Activated T-helper 2 cell treated with anti-CD3 and anti-CD28 coated beads, Interferon-gamma antibody, Interleukin-2, Interleukin-4, amounts not matched to agents 10 μg/mL and 5 μg/mL and 100 μg/mL, durations not matched to agents 14 hours and 24 hours and 36 hours (primary cell): ENCODE measurements at regions of chr2 and their contacts with region 1.

Region 1: GRCh38 chr2:64019719-64020528 is 696 bp upstream of the VPS54 start:
- DNase-seq: no peak
- H3K4me3 Mint-ChIP-seq: peak overlapping the region; percentile 81
- H3K27ac Mint-ChIP-seq: peak overlapping the region; percentile 94
- H3K4me1 Mint-ChIP-seq: peaks cover 40% of the 10 kb centered on the region
- H3K27me3 Mint-ChIP-seq: no peaks in the 10 kb centered on the region

Region 2: GRCh38 chr2:63841254-63842022 is 178.5 kb before region 1 on chr2 and contains the start of gene UGP2:
- intact Hi-C with region 1: loop called (anchors 5 kb)
- DNase-seq: peak; percentile 88
- H3K4me3 Mint-ChIP-seq: peak within 1 kb of the TSS; percentile 92
- H3K27ac Mint-ChIP-seq: peak within 1 kb of the TSS; percentile 95
- H3K4me1 Mint-ChIP-seq: peaks cover 48% of the 10 kb centered on the region
- H3K27me3 Mint-ChIP-seq: peaks cover 2% of the 10 kb centered on the region
- total RNA-seq, gene UGP2: 90.8 and 91.2 TPM in 2 replicates

Region 3: DNA sequence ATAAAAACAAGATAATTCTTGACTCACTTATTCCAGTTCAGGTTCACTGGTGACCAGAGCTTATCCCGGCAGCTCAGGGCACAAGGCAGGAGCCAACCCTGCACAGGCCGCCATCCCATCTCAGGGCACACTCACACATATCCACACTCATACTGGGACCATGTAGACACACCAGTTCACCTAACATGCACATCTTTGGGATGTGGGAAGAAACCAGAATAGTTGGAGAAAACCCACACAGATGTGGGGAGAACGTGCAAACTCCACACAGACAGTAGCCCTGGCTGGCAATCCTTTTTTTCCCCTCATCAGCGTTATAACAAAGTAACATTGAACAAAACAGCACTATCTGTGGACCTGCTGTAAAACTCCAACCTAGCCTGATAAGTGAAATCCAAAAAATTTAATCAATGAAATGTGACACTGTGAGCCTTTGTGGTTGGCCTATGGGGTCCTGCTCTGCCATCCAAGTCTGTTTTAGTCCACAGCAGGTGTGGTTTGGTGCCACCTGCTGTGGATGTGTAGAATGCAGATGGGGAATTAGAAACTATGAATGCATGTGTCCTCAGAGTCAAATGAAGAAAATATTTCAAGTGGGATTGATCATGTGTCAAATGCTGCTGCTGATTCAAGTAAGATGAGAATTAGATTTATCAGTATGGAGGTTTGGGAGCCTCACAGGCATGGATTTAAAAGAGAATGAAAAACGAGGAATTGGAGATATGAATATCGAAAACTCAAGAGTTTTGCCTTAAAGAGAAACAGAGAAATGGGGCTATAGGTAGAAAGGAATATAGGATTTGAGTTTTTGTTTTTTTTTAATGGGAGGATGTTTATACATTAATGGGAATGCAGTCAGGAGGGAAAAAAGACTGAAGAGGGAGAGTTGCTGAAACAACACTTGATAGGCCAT is 131.2 kb before region 1 on chr2:
- intact Hi-C with region 1: loop called (anchors 5 kb)
- DNase-seq: peak; percentile 21
- H3K4me3 Mint-ChIP-seq: no peak overlapping the region
- H3K27ac Mint-ChIP-seq: peak overlapping the region; percentile 19
- H3K4me1 Mint-ChIP-seq: peaks cover 8% of the 10 kb centered on the region
- H3K27me3 Mint-ChIP-seq: no peaks in the 10 kb centered on the region

Region 4: GRCh38 chr2:63983986-63984605 is 35.8 kb before region 1 on chr2:
- intact Hi-C with region 1: loop called (anchors 5 kb)
- DNase-seq: no peak
- H3K4me3 Mint-ChIP-seq: no peak overlapping the region
- H3K27ac Mint-ChIP-seq: no peak overlapping the region
- H3K4me1 Mint-ChIP-seq: peaks cover 29% of the 10 kb centered on the region
- H3K27me3 Mint-ChIP-seq: no peaks in the 10 kb centered on the region

Region 5: GRCh38 chr2:64141674-64142405 is 121.9 kb after region 1 on chr2:
- intact Hi-C with region 1: no loop called
- DNase-seq: no peak
- H3K4me3 Mint-ChIP-seq: peak overlapping the region; percentile 89
- H3K27ac Mint-ChIP-seq: peak overlapping the region; percentile 66
- H3K4me1 Mint-ChIP-seq: peaks cover 40% of the 10 kb centered on the region
- H3K27me3 Mint-ChIP-seq: no peaks in the 10 kb centered on the region